ENCODE measurements at regions of chr14 and their contacts with region 1.

Region 1: DNA sequence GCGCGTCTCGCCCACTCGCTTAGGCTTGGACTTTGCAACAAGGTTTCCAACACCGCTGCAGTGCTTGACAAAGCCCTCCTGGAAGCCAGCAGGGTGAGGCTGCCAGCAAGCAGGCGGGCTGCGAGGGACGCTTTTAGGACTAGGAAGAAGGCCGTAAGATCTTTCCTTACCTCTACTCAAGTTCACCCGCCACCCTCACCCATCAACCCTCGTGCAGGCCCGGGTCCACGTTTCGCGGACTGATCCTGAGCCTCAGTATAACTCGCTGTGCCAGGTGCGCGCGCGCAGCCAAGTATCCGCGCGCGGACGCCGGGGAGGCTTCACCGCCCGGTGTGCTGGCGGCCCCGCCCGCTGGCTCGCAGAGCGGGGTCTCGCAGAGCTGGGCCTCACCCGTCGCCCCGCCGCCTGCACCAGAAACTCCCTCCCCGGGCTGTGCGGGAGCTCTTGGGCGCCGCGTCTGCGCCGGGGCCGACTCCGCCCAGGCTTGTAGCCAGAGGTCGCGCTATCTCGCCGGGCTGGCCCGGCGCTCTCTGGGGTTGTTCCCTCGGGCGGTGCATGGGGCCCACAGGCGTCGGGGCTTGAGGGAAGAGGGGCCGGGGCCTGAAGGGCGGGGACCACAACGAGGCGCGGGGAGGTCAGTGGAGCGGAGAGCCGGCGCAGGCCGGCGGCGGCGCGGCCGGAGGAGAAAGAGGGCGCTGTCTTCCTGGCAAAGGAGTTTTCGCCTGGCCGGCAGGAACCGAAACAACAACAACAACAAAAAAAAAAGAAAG is 7.6 kb upstream of the SIX1 start:
- DNase-seq: no peak

Region 2: GRCh38 chr14:60643463-60644314 is 13.2 kb before region 1 on chr14:
- CTCF ChIA-PET with region 1: interaction called, 3 read pairs
- POLR2A ChIA-PET with region 1: interaction called, 28 read pairs
- DNase-seq: no peak

Region 3: DNA sequence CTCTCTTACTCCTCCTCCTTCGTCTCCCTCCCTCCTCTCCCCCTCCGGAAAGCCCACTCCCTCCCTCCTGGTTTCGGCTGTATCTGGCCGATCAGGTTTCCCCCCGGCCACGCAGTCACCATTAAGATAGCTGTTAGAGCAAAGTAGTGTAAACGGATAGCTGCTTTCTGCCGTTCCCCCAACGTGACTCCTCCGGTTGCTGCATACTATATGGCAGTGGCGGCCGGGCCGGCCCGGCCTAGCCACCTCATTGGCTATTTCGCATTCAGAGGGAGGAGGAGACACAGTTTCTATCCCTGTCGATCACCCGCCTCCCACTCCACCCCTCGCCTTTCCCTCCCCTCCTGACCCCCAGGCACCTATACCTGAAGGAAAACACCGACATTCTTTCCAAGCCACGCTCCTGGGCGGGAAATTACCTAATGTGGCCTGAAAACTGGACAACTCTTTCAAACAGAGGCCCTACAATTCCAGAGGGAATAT is 67.3 kb after region 1 on chr14 and contains the start of gene SIX4:
- CTCF ChIA-PET with region 1: interaction called, 4 read pairs
- POLR2A ChIA-PET with region 1: interaction called, 71 read pairs
- DNase-seq: peak; percentile 80

Region 4: DNA sequence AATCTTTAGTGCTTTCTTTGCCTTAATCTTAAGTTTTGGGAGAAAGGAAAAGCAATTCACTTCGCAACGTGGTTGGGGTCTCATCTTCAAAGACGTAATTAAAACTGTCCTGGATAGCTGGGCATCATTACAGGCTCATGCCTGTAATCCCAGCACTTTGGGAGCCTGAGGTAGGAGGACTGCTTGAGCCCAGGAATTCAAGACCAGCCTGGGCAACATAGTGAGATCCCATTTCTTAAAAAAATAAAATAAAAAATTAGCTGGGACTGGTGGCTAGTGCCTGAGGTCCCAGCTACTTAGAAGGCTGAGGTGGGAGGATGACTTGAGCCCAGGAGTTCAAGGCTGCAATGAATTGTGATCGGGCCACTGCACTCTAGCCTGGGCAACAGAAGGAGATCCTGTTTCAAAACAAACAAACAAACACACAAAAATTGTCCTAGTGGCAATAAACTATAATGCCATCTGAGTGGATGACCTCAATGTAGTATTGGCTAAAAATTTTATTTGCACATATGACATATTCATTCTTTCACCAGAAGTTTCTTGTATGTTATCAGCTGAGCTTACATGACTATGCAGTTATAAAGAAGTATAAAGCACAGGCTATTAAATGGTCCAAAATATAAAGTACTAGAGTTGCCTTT is 76.1 kb after region 1 on chr14:
- CTCF ChIA-PET with region 1: interaction called, 4 read pairs
- POLR2A ChIA-PET with region 1: interaction called, 10 read pairs
- DNase-seq: no peak

Region 5: GRCh38 chr14:60980811-60981632 is 324.2 kb after region 1 on chr14 and contains the starts of genes SLC38A6 and TRMT5:
- CTCF ChIA-PET with region 1: no interaction called
- POLR2A ChIA-PET with region 1: interaction called, 10 read pairs
- DNase-seq: peak; percentile 90